CD4-positive, alpha-beta T cell (primary cell): ENCODE measurements at regions of chr6 and their contacts with region 1.

Region 1: DNA sequence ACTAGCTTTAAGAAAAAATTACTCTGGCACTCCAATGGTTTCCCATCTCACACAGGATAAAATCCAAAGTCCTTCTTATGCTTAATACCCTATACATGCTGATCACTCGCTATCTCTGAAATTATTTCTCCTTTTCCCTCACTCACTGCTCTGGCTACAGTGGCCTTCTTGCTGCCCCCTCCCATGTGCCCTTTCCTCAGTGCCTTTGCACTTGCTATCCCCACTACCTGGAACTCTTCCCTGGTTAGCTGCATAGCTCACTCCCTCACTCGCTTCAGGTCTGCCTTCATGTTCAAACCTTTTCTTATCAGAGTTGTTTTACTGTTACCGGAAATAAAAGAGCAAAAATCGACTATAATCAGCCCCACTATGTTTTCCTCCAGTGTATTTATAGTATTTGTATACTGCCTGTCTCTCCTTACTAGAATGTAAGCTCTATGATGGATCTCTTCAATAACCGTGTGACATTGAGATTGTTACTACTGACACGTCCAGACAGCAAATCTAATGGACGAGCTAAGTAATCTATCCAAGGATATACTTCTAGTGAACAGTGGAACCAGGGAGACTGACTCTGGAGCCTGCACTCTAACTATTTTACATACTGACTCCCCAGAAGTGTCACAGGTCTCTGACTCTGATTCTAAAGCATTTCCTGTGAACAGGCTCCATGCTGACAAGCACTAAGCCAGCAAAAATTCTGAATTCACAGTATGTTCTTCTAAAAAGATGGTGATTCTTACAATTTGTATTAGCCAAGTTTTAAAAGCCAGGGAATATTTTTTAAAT is 25.1 kb downstream of the FKBP5 start:
- DNase-seq: peak in 4 of 14 experiments; percentile 30 to 56 (median 50)
- ATAC-seq: peak; percentile 77
- H3K4me3 ChIP-seq: peak overlapping the region; percentile 10
- H3K4me3 Mint-ChIP-seq: no peak overlapping the region
- H3K27ac ChIP-seq: peak overlapping the region; percentile 54 to 55
- H3K27ac Mint-ChIP-seq: no peak overlapping the region
- H3K4me1 ChIP-seq: peaks cover 47% of the 10 kb centered on the region
- H3K4me1 Mint-ChIP-seq: peaks cover 26% of the 10 kb centered on the region
- H3K27me3 ChIP-seq: no peaks in the 10 kb centered on the region
- H3K27me3 Mint-ChIP-seq: no peaks in the 10 kb centered on the region
- CTCF ChIP-seq: no peak

Region 2: GRCh38 chr6:35601331-35602132 is 62.1 kb before region 1 on chr6:
- CTCF ChIA-PET with region 1: interaction called, 5 read pairs
- POLR2A ChIA-PET with region 1: interaction called, 10 read pairs
- intact Hi-C with region 1: no loop called
- DNase-seq: peak; percentile 50 to 93 (median 64)
- ATAC-seq: peak; percentile 74
- H3K4me3 ChIP-seq: peak overlapping the region; percentile 42
- H3K4me3 Mint-ChIP-seq: peak overlapping the region; percentile 82
- H3K27ac ChIP-seq: peak overlapping the region; percentile 52 to 82
- H3K27ac Mint-ChIP-seq: peak overlapping the region; percentile 85
- H3K4me1 ChIP-seq: peaks cover 70% of the 10 kb centered on the region
- H3K4me1 Mint-ChIP-seq: peaks cover 87% of the 10 kb centered on the region
- H3K27me3 ChIP-seq: no peaks in the 10 kb centered on the region
- H3K27me3 Mint-ChIP-seq: no peaks in the 10 kb centered on the region
- CTCF ChIP-seq: no peak

Region 3: GRCh38 chr6:35648203-35648602 is 15.4 kb before region 1 on chr6:
- CTCF ChIA-PET with region 1: interaction called, 4 read pairs
- POLR2A ChIA-PET with region 1: interaction called, 6 read pairs
- intact Hi-C with region 1: loop called in 1 of 2 experiments (anchors 2 kb)
- DNase-seq: no peak
- ATAC-seq: no peak
- H3K4me3 ChIP-seq: no peak overlapping the region
- H3K4me3 Mint-ChIP-seq: no peak overlapping the region
- H3K27ac ChIP-seq: no peak overlapping the region
- H3K27ac Mint-ChIP-seq: peak overlapping the region; percentile 91
- H3K4me1 ChIP-seq: peaks cover 19% of the 10 kb centered on the region
- H3K4me1 Mint-ChIP-seq: peaks cover 77% of the 10 kb centered on the region
- H3K27me3 ChIP-seq: no peaks in the 10 kb centered on the region
- H3K27me3 Mint-ChIP-seq: no peaks in the 10 kb centered on the region
- CTCF ChIP-seq: no peak

Region 4: GRCh38 chr6:35678021-35678654 is 14.5 kb after region 1 on chr6:
- CTCF ChIA-PET with region 1: interaction called, 14 read pairs
- POLR2A ChIA-PET with region 1: interaction called, 26 read pairs
- intact Hi-C with region 1: loop called in 1 of 2 experiments (anchors 2 kb)
- DNase-seq: no peak
- ATAC-seq: peak; percentile 43
- H3K4me3 ChIP-seq: no peak overlapping the region
- H3K4me3 Mint-ChIP-seq: peak overlapping the region; percentile 53
- H3K27ac ChIP-seq: peak overlapping the region in 1 of 2 donors; percentile 23
- H3K27ac Mint-ChIP-seq: peak overlapping the region; percentile 79
- H3K4me1 ChIP-seq: peaks cover 51% of the 10 kb centered on the region
- H3K4me1 Mint-ChIP-seq: peaks cover 93% of the 10 kb centered on the region
- H3K27me3 ChIP-seq: no peaks in the 10 kb centered on the region
- H3K27me3 Mint-ChIP-seq: no peaks in the 10 kb centered on the region
- CTCF ChIP-seq: no peak

Region 5: DNA sequence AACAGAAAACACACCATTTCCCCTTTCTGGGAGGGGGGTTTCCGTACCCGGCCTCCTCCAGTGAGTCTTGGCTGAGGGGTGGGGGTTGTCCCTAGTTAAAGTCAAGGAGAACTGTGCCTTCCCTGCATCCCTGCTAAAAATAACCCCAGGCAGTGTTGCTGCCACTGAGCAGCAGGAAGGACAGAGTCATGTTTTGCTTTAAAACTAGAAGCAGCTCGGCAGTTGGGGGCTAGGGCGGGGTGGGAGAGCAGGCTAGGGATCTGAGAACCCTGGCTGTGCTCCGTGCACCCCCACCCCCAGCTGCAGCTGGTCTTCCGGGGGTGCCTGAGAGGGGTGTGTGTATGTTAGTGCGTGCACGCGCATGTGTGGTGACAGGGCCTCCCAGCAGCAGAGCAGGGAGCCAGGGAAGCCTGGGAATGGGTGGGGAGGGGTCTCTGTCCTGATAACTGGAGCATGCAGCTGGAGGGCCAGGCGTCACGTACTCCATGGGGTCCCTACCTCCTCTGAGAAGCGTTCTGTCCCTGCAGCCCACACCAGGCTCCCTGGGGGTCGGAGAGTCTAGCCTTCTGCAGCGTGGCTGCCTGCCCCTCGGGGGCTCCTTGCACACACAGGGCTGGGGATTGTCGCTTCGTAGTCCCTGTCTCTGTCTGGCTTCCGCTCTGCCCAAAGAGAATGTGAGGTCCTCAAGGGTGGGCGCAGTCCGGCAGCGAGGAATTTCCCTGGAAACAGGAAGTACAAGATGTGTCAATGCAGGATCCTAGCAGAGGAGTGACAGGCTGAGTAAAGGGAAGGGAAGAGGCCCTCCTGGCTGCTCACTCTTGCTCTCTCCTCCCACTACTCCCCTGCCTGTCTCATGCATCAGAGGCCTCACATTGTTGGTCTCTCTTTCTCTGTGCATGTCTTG is 56.4 kb after region 1 on chr6:
- CTCF ChIA-PET with region 1: no interaction called
- POLR2A ChIA-PET with region 1: interaction called, 3 read pairs
- intact Hi-C with region 1: loop called in 1 of 2 experiments (anchors 2 kb)
- DNase-seq: peak in 5 of 14 experiments; percentile 34 to 70 (median 54)
- ATAC-seq: peak; percentile 47
- H3K4me3 ChIP-seq: peak overlapping the region; percentile 15
- H3K4me3 Mint-ChIP-seq: peak overlapping the region; percentile 73
- H3K27ac ChIP-seq: peak overlapping the region in 1 of 2 donors; percentile 49
- H3K27ac Mint-ChIP-seq: peak overlapping the region; percentile 84
- H3K4me1 ChIP-seq: peaks cover 70% of the 10 kb centered on the region
- H3K4me1 Mint-ChIP-seq: peaks cover 86% of the 10 kb centered on the region
- H3K27me3 ChIP-seq: no peaks in the 10 kb centered on the region
- H3K27me3 Mint-ChIP-seq: no peaks in the 10 kb centered on the region
- CTCF ChIP-seq: no peak